Transverse colon (tissue), 4 donors: ENCODE measurements at regions of chr4 and their contacts with region 1.

Region 1: GRCh38 chr4:95549246-95550114 is 707 bp upstream of the UNC5C start:
- DNase-seq: peak; percentile 25
- H3K4me3 ChIP-seq: peak overlapping the region; percentile 31 to 58 (median 44)
- H3K27ac ChIP-seq: peak overlapping the region; percentile 74 to 85 (median 79)
- H3K4me1 ChIP-seq: peaks cover 0 to 6% (median 2%) of the 10 kb centered on the region in 4 donors
- H3K27me3 ChIP-seq: peaks cover 45% of the 10 kb centered on the region
- CTCF ChIP-seq: no peak
- EP300 ChIP-seq: no peak
- POLR2A ChIP-seq: no peak

Region 2: DNA sequence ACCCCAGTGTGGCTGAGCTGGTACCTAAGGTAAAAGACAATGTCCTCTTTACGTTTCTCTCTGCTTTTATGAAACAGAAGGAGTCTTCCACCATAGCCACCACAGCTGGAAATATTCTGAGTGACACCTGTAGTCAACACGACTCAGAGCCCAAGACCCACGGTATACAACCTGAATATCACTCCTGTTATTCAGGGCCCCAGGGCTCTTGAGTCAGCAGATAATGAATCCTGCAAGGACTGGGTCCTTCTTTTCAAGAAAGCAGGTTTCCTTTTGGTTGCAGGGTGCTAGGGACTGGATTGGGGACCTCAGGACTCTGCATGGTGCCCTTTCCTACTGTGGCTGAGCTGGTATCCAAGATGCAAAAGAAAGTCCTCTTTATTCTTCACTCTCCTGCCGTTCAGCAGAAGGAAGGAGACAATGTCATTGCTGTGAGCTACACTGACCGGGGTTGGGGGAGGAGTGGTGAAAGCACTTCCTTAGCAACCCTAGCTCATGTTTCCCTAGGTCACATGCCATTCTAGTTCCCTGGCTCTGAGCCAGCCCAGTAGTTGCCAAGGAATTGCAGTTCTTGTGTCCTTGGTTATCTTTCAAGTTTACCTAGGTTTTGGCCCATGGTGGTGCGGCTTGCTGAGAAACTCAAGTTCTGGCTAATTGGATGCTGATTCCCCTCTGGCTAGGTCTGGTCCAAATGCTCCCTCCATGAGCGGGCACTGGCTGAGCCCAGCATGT is 23.0 kb after region 1 on chr4:
- in situ Hi-C with region 1: no loop called
- intact Hi-C with region 1: loop called (anchors 1 kb)
- DNase-seq: peak; percentile 25
- H3K4me3 ChIP-seq: no peak overlapping the region
- H3K27ac ChIP-seq: no peak overlapping the region
- H3K4me1 ChIP-seq: no peaks in the 10 kb centered on the region
- H3K27me3 ChIP-seq: no peaks in the 10 kb centered on the region
- CTCF ChIP-seq: no peak
- EP300 ChIP-seq: no peak
- POLR2A ChIP-seq: no peak